Motor neuron (in vitro differentiated cells): ENCODE measurements at regions of chr15 and their contacts with region 1.

Region 1: DNA sequence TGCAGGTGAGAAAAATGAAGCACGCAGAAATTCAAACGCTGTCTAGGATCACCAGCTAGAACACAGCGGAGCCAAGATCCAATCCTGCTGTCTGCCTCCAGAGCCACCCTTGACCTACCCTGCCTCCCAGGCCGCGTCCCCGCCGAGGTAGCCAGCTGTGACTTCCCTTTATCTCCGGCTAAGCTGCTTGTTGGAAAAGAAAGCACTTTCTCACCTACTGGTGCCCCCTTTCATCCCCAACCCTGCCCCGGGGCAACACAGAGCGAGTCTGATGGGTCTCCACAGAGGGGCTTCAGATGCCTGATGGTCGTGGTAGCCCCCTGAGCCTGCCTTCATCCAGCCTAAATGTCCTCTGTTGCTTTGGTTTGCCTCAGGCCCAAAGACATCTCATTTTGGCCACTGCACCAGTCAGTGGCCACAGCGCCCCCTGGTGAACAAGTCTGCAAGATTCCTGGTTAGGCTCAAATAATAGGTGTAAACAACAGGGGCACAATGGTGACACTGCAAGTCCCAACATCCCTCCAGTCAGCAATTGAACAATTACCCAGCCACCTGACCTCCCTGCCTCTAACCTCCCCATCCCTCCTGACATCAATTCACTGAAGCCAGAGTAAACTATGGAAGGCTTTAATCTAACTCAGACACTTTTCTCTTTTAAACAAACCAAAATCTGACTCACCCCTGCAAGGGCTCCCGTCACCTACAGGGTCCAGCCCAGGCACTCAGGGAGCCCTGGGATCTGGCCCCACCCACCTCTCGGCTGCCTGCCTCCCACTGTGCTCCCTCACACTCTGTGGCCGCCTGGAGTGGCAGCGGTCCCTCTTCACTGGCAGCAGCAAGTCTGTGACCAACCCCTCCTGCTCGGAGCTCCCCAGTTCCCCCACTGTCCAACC is 27.3 kb upstream of the BCL2L10 start:
- ATAC-seq: peak; percentile 62 to 87 (median 66)
- H3K4me3 ChIP-seq: no peak overlapping the region
- H3K27ac ChIP-seq: no peak overlapping the region
- H3K4me1 ChIP-seq: no peaks in the 10 kb centered on the region

Region 2: DNA sequence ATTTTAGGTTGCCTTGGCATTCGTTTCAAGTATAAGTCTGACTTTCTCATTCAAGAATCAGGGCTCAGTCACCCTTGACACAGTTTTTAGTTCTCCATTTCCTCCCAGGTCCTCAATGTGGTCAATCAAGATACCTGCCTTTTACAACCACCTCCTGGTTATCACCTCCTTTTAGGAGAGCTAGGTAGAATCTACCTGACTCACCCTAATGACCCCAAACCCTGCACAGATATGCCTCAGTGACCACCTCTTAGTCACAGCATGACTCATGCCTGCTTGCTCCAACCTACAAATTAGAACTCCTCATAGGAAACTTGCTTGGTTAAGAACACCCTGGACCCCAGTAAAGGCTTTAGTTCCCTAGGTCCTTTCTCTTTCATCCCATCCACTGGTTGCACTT is 539.7 kb before region 1 on chr15:
- in situ Hi-C with region 1: no loop called
- ATAC-seq: no peak
- H3K4me3 ChIP-seq: no peak overlapping the region
- H3K27ac ChIP-seq: no peak overlapping the region
- H3K4me1 ChIP-seq: no peaks in the 10 kb centered on the region

Region 3: GRCh38 chr15:51619331-51620035 is 520.4 kb before region 1 on chr15:
- in situ Hi-C with region 1: no loop called
- ATAC-seq: no peak
- H3K4me3 ChIP-seq: peak overlapping the region in 1 of 5 donors; percentile 57
- H3K27ac ChIP-seq: no peak overlapping the region
- H3K4me1 ChIP-seq: peaks cover 4 to 9% of the 10 kb centered on the region in 2 donors

Region 4: DNA sequence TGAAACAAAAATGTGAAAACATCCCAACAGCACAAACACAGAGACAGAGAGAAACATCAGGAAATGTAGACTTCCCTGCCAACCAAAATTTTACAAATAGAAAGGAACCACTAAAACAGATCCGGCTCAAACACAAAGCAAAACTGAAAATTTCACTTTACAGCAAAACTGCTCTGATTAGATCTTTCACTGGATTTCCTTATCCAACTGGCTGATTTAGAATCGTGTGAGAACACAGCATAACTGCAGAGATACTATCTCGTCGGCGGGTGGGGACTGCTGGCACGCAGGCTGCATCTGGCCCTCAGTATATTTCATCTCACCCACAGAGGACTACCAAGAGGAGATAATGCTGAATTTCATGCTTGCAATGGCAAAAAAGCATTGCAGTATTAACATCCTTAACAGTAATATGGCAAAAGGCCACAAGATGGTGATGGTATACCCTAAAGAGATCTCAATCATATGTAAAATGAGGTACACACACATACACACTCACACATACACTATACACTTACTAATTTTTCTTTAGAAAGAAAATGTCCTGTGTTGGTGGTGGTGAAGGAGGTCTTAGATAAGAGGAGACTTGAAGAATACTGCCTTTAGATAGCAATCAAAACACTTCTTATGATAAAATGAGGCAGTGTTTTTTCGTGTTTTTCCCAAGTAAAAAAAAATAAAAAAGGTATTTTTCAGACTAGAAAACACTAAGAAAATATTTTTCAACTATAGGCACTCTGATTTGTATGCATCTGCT is 157.7 kb before region 1 on chr15:
- in situ Hi-C with region 1: loop called in 1 of 9 experiments (anchors 25 kb)
- ATAC-seq: peak; percentile 62 to 94 (median 82)
- H3K4me3 ChIP-seq: no peak overlapping the region
- H3K27ac ChIP-seq: no peak overlapping the region
- H3K4me1 ChIP-seq: peaks cover 0 to 3% of the 10 kb centered on the region in 2 donors

Region 5: GRCh38 chr15:52349052-52349700 is 209.3 kb after region 1 on chr15:
- in situ Hi-C with region 1: no loop called
- ATAC-seq: peak in 2 of 8 experiments; percentile 5 to 75
- H3K4me3 ChIP-seq: no peak overlapping the region
- H3K27ac ChIP-seq: no peak overlapping the region
- H3K4me1 ChIP-seq: no peaks in the 10 kb centered on the region

Region 6: GRCh38 chr15:52481915-52482314 is 342.1 kb after region 1 on chr15:
- in situ Hi-C with region 1: no loop called
- ATAC-seq: peak in 2 of 8 experiments; percentile 45 to 64
- H3K4me3 ChIP-seq: no peak overlapping the region
- H3K27ac ChIP-seq: no peak overlapping the region
- H3K4me1 ChIP-seq: peaks cover 5 to 7% of the 10 kb centered on the region in 2 donors